PC-9 (cell line): ENCODE measurements at regions of chr3 and their contacts with region 1.

Region 1: DNA sequence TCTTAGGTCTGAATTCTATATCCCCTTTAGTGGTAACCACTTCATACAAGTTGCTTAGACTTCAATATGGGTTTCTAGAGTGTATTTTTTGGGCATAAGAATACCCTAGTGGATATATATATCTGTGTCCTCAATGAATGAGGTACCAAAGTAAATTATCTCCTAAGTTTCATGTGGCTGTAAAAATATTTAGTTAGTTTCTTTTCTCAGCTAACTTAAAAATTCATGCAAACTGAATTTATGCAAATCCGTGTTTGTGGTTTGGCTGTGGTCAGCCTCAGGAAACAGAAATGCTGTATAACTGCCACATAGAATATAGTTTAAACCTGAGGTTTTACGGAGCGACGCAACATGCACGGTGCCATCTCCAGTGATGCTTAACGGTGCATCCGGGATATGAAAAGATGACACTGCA is 80.3 kb downstream of the PEX5L start:
- DNase-seq: no peak
- H3K4me3 ChIP-seq: no peak overlapping the region
- H3K27ac ChIP-seq: no peak overlapping the region
- H3K4me1 ChIP-seq: no peaks in the 10 kb centered on the region
- H3K27me3 ChIP-seq: no peaks in the 10 kb centered on the region
- CTCF ChIP-seq: no peak

Region 2: DNA sequence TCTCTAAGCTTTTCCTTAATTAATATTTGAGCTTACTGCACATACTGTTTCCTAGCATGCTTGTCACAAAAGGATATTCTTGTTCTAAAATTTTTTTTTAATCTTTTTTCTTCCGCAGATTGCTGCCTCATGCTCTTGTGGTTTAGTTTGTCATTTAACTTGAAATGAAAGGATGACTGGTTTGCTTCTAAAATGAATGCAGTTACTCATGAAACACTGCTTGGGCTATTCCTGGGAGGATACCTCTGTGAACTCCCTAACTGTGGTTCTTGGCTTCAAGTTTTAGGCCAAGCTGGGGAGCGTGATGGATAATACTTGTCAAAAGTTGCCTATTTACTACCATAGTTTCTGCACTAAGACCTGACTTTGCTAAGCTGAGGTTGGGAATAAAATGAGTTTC is 239.6 kb before region 1 on chr3:
- CTCF ChIA-PET with region 1: no interaction called
- POLR2A ChIA-PET with region 1: no interaction called
- intact Hi-C with region 1: no loop called
- DNase-seq: no peak
- H3K4me3 ChIP-seq: no peak overlapping the region
- H3K27ac ChIP-seq: no peak overlapping the region
- H3K4me1 ChIP-seq: no peaks in the 10 kb centered on the region
- H3K27me3 ChIP-seq: no peaks in the 10 kb centered on the region
- CTCF ChIP-seq: no peak

Region 3: DNA sequence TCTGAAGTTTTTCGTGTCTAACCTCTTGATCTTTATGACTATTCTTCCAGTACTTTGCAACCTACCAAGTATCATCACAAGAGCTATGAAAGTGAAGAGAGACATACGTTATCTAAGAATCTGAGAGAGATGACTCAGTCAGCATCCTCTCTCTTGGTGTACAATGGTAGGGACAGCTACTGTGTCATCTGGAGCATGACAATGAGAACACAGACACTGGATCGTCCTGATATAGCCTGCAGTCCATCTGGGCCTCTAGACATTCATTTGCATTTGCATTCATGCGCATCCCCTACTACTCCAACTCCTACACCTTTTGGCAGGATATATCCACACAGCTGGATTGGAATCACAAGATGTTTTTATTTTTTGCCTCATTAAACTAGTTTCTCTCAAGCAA is 34.9 kb before region 1 on chr3:
- CTCF ChIA-PET with region 1: interaction called, 16 read pairs
- POLR2A ChIA-PET with region 1: no interaction called
- intact Hi-C with region 1: loop called (anchors 1 kb)
- DNase-seq: no peak
- H3K4me3 ChIP-seq: no peak overlapping the region
- H3K27ac ChIP-seq: no peak overlapping the region
- H3K4me1 ChIP-seq: no peaks in the 10 kb centered on the region
- H3K27me3 ChIP-seq: no peaks in the 10 kb centered on the region
- CTCF ChIP-seq: no peak